Left cardiac atrium (tissue), 4 donors: ENCODE measurements at regions of chr13 and their contacts with region 1.

Region 1: DNA sequence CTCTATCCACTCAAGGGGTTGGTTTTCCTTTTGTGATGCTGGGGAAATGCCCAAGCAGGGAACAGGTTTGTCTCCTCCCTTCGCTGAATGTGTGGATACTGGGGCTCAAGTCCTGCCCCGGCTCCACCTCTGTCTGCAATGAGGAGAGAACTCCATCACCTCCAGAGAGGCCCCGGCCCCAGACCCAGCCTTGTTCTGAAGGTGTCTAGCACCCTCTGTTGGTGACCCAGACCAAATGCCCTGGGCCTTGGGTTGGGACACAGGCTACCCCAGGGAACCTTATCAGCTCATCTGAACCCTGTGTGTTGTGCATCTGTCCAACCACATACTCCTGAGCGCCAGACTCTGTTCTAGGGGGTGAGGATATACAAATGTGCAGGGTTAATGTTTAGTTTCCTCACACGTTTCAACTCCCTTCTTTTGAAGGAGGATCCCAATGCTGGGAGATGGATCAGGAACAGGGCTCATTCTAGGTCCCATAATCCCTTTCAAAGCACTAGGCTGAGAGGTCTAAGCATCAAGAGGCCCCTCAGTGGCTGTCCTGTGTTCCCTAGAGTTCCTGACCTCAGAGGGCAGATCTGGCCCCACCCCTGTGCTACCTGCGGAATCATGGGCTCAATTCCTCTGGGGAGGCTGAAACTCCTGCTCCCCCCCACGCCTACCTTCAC is 112.5 kb upstream of the SLC7A1 start:
- DNase-seq: peak; percentile 35
- ATAC-seq: peak; percentile 55 to 68

Region 2: DNA sequence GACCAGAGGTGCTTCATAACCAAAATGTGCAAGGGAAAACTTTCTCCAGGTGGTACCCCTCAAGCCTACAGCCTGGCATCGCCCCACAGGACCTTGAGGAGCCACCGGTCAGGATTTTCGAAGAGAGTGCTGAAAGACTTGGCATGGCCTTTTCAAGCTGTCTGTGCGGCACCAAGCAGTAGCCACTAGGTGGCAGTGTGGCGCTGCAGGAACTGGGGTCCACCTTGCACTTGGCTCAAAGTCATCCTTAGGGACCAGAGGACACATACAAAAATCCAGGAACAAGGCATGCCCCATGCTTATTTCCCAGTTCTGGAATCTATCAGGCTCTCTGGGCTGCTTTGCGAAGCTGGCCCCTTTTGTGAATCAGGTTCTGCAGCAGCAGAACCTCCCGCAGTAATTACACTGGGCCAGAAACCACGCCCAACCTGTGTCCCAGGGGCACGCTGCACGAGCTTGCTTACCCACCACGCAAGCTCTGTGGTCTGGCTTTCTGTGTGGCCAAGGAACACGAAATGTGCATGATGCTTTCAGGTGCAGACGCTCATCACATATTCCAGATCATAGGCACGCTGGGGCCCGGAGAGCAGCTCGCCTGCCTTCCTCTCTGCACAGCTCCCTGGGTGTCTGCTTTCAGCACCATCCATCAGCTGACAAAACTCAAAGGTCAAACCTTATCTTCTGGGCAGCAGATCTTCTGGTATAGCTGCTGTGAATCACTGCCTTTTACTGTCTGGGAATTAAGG is 199.7 kb before region 1 on chr13:
- intact Hi-C with region 1: loop called (anchors 2 to 5 kb)
- DNase-seq: peak; percentile 87
- ATAC-seq: peak; percentile 84 to 89

Region 3: GRCh38 chr13:29743201-29743786 is 35.3 kb after region 1 on chr13:
- intact Hi-C with region 1: no loop called
- DNase-seq: no peak
- ATAC-seq: peak; percentile 64 to 87

Region 4: DNA sequence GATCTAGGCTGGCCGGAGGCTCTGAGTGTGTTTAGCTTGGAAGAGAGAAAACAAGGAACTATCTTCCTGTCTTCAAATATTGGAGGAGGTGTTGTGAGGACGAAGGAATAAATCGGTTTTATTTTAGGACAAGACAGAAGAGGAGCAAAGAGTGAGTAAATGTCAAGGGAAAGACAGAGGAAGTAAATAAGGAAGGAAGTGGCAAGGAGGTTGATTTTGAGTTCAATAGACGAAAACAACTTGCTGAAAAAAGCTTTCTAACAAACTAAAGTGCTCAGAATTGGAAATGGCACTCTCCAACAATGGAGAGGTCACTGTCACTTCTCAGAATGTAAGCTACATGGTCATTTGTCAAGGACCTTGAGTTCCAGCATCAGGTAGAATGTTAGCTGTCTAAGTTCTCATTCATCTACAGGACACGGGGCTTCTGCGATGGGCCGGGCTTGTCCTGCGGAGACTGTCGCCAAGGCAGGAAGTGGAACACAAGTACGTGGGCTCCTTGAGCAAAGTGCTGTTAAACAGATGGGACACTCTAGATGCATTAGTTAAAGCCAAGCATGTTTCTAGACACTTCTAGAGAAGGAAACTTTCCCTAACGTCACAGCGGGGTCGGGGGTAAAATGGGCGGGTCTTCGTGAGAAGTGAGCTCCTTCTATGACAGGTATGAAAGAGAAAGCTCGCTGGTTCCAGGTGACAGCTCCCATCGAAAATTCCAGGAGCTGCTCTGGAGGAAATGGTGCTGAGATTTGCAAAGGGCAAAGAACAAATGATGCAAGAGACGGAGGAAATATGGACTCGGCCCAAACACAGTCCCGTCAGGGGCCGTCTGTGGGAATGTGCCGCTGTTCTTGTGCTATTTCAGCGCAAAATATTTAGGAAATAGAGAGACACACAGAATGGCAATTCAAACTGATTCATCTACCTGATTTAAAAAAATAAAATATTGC is 246.3 kb after region 1 on chr13:
- intact Hi-C with region 1: no loop called
- DNase-seq: no peak
- ATAC-seq: no peak